Activated B cell treated with CpG ODN at 0.5 μM for 24 hours (primary cell): ENCODE measurements at regions of chr17 and their contacts with region 1.

Region 1: GRCh38 chr17:75405365-75406221 is at the start of gene GRB2:
- DNase-seq: peak; percentile 100
- ATAC-seq: peak; percentile 81
- H3K4me3 Mint-ChIP-seq: peak within 1 kb of the TSS; percentile 99
- H3K27ac Mint-ChIP-seq: peak within 1 kb of the TSS; percentile 97
- H3K4me1 Mint-ChIP-seq: peaks cover 43% of the 10 kb centered on the region
- H3K27me3 Mint-ChIP-seq: no peaks in the 10 kb centered on the region
- CTCF ChIP-seq: no peak
- total RNA-seq, gene GRB2: 307 and 320 TPM in 2 replicates

Region 2: GRCh38 chr17:75205037-75205792 is 200.4 kb before region 1 on chr17 and contains the start of gene NUP85:
- CTCF ChIA-PET with region 1: no interaction called
- POLR2A ChIA-PET with region 1: no interaction called
- intact Hi-C with region 1: loop called (anchors 1 kb)
- DNase-seq: peak; percentile 90
- ATAC-seq: peak; percentile 91
- H3K4me3 Mint-ChIP-seq: peak within 1 kb of the TSS; percentile 96
- H3K27ac Mint-ChIP-seq: peak within 1 kb of the TSS; percentile 99
- H3K4me1 Mint-ChIP-seq: peaks cover 22% of the 10 kb centered on the region
- H3K27me3 Mint-ChIP-seq: no peaks in the 10 kb centered on the region
- CTCF ChIP-seq: no peak
- total RNA-seq, gene NUP85: 103 and 107 TPM in 2 replicates

Region 3: DNA sequence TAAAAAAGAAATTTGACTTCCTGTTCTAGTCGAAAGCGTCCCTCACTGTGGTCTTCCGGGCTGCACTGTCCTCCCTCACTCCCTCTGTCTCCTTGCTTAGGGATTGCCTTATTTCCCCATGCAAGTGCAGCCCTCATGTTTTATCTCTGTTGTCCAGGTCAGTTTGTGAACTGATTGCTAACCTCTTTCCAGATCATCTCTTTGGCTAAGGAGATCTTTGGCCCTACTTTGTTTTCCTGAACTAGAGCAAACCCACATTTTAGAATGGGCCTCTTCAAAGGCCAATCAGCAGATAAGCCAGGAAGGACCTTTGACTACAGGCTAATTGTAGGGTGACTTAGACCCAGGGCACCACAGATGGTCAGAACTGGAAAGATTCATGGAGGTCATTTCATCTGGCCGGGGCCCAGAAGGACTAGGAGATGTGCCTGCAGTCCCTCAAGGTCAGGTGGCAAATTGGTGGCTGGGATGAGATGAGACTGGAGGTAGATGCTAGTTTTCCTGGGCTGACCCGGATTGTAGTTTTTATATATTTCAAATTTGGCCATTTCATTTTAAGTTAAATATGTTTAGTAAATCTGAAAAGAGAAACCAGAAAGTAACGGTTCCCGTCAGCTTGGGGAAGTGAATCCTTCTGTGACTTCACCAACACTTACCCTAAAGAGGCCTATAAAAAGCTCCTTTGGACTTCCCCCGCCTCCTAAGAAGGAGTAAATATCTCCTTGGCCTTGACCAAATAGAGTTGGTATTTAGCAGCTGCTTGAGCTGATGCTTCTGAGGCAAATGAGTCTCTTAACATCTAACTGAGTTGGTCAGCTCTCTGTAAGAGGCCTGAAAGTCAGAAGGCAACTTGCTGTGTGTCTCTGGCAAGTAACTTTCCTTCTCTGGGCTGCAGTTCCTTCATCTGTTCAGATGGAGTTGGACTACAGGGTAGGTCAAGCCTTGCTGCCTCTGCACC is 110.1 kb before region 1 on chr17:
- CTCF ChIA-PET with region 1: interaction called, 7 read pairs
- POLR2A ChIA-PET with region 1: interaction called, 136 read pairs
- intact Hi-C with region 1: loop called (anchors 1 kb)
- DNase-seq: peak; percentile 46
- ATAC-seq: peak; percentile 64
- H3K4me3 Mint-ChIP-seq: peak overlapping the region; percentile 76
- H3K27ac Mint-ChIP-seq: peak overlapping the region; percentile 100
- H3K4me1 Mint-ChIP-seq: peaks cover 77% of the 10 kb centered on the region
- H3K27me3 Mint-ChIP-seq: no peaks in the 10 kb centered on the region
- CTCF ChIP-seq: no peak

Region 4: DNA sequence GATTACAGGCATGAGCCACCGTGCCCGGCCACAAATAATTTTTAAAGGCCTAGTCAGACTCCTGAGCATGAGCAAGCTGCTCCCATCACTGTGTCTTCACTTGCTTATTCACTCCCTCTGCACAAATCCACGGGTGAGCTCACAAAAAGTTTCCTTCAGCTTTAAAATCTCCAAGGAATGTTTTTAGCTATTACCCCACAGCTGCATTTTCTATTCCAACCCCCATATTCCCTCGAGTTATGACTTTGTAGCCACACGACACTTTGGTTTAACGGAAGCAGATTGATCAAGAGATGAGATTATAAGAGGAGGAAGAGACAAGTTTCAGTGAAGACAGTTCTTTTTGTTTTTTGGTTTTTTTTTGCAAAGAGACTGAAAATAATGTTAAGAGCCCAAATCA is 67.3 kb before region 1 on chr17:
- CTCF ChIA-PET with region 1: interaction called, 3 read pairs
- POLR2A ChIA-PET with region 1: interaction called, 42 read pairs
- intact Hi-C with region 1: no loop called
- DNase-seq: no peak
- ATAC-seq: peak; percentile 19
- H3K4me3 Mint-ChIP-seq: peak overlapping the region; percentile 62
- H3K27ac Mint-ChIP-seq: peak overlapping the region; percentile 84
- H3K4me1 Mint-ChIP-seq: peaks cover 89% of the 10 kb centered on the region
- H3K27me3 Mint-ChIP-seq: no peaks in the 10 kb centered on the region
- CTCF ChIP-seq: no peak

Region 5: DNA sequence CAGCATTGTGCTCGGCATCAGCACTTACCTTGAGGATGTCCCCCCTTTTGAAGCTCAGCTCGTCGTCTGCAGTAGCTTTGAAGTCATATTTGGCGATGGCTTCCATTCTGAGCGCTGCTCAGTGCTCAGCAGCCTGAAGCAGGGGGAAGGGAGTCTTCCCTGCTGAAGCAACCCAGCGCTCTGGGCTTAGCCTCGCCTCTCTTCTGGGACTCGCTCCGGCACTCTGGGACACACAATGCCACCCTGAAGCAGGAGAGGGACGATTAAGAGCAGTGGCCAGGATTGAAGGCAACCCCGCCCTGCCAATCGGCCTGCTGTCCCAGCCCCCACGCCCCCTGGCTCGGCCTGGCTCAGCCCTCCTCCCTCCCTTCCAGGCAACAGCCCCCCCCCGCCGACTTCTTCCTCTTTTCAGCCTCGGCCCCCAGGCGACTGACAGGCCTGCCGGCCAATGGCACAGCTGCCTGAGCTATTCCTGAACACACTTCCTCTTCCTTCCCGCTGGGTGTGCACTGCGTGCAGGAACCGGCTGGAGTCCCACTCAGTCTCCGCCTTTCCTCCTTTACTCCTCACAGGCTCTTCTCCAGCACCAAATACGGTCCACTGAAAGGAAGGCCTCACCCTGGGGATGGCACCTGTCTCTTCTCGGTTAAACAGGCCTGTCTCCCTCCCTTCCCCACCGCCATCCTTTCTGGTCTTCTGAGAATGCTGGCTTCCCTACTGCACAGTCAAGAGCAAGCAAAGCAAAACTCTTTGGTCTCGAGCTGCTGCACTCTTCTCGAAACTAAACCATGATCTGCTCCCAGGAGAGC is 11.9 kb before region 1 on chr17:
- CTCF ChIA-PET with region 1: interaction called, 6 read pairs
- POLR2A ChIA-PET with region 1: interaction called, 43 read pairs
- intact Hi-C with region 1: loop called (anchors 1 kb)
- DNase-seq: peak; percentile 84
- ATAC-seq: peak; percentile 96
- H3K4me3 Mint-ChIP-seq: peak overlapping the region; percentile 92
- H3K27ac Mint-ChIP-seq: peak overlapping the region; percentile 88
- H3K4me1 Mint-ChIP-seq: peaks cover 84% of the 10 kb centered on the region
- H3K27me3 Mint-ChIP-seq: no peaks in the 10 kb centered on the region
- CTCF ChIP-seq: no peak

Region 6: GRCh38 chr17:76737082-76737675 is 1331.6 kb after region 1 on chr17 and contains the start of gene SRSF2:
- CTCF ChIA-PET with region 1: no interaction called
- POLR2A ChIA-PET with region 1: no interaction called
- intact Hi-C with region 1: loop called (anchors 5 kb)
- DNase-seq: peak; percentile 99
- ATAC-seq: peak; percentile 74
- H3K4me3 Mint-ChIP-seq: peak within 1 kb of the TSS; percentile 97
- H3K27ac Mint-ChIP-seq: peak within 1 kb of the TSS; percentile 96
- H3K4me1 Mint-ChIP-seq: peaks cover 50% of the 10 kb centered on the region
- H3K27me3 Mint-ChIP-seq: no peaks in the 10 kb centered on the region
- CTCF ChIP-seq: no peak
- total RNA-seq, gene SRSF2: 335 and 367 TPM in 2 replicates